ENCODE measurements at regions of chr2 and their contacts with region 1.

Region 1: GRCh38 chr2:144493027-144493809 is 26.7 kb downstream of the ZEB2 start:
- DNase-seq: no peak
- H3K4me3 ChIP-seq: no peak overlapping the region
- H3K27ac ChIP-seq: no peak overlapping the region
- H3K4me1 ChIP-seq: no peaks in the 10 kb centered on the region
- CTCF ChIP-seq: no peak

Region 2: DNA sequence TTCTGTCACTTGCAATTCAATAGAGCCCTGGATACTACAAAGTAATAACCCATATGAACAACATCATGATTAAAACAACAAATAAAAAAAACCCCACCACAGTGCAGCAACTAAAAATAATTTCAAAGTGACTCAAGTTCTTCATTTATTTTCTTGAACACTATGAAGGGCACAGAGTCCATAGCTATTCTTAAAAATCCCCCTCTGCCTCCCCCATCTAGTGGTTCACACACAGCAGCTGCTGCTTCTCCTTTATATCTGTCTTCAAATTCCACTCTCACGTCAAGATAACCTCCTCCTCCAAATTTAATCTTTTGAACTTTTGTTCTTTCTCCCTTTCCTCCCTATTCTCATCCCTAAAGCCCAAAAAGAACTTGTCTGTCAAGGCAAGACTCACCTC is 564.6 kb before region 1 on chr2:
- CTCF ChIA-PET with region 1: no interaction called
- POLR2A ChIA-PET with region 1: no interaction called
- intact Hi-C with region 1: no loop called
- DNase-seq: no peak
- H3K4me3 ChIP-seq: no peak overlapping the region
- H3K27ac ChIP-seq: no peak overlapping the region
- H3K4me1 ChIP-seq: no peaks in the 10 kb centered on the region
- CTCF ChIP-seq: no peak

Region 3: GRCh38 chr2:144389151-144389929 is 103.9 kb before region 1 on chr2:
- CTCF ChIA-PET with region 1: no interaction called
- POLR2A ChIA-PET with region 1: interaction called, 10 read pairs
- intact Hi-C with region 1: no loop called
- DNase-seq: no peak
- H3K4me3 ChIP-seq: no peak overlapping the region
- H3K27ac ChIP-seq: no peak overlapping the region
- H3K4me1 ChIP-seq: no peaks in the 10 kb centered on the region
- CTCF ChIP-seq: no peak

Region 4: GRCh38 chr2:144479138-144479537 is 14.1 kb before region 1 on chr2:
- CTCF ChIA-PET with region 1: no interaction called
- POLR2A ChIA-PET with region 1: interaction called, 15 read pairs
- intact Hi-C with region 1: no loop called
- DNase-seq: no peak
- H3K4me3 ChIP-seq: no peak overlapping the region
- H3K27ac ChIP-seq: no peak overlapping the region
- H3K4me1 ChIP-seq: peaks cover 12% of the 10 kb centered on the region
- CTCF ChIP-seq: no peak